ENCODE measurements at regions of chr12 and their contacts with region 1.

Region 1: DNA sequence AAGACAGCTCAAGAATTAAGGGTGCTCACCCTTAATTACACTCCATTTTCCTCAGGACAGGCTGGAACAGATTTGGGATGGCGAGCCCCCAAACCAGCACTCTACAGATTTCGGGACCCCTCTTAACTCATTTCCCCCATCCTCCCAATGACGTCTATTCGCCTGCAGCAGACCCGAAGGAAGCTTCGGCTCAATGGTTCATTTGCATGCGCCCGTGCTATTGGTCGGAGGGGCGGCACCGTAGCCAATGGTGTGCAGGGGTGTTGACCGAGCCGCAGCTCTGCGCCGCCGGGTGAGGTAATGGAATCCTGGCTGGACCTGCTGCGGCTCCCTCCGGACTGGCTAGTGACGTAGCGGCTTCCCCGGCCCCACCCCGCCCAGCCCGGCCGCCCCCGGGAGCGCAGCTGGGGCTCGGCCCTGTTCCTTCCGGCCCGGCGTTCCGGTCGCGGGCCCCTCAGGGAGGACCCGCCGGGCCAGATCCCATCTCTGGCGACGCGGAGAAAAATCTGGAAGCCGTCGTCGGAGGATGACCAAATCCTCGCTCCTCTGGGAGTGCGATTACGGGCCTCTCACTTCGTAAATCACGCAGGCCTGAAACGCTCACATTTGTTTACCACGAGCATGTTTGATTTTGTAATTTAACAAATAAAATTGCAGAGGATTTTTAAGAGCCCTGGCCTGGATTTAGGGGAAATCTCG is 18.3 kb upstream of the NR4A1 start:
- DNase-seq: peak; percentile 95
- ATAC-seq: peak; percentile 79
- H3K4me3 ChIP-seq: peak overlapping the region; percentile 34 to 62 (median 57)
- H3K4me3 Mint-ChIP-seq: peak overlapping the region; percentile 88
- H3K27ac ChIP-seq: peak overlapping the region; percentile 93 to 96
- H3K27ac Mint-ChIP-seq: peak overlapping the region; percentile 94
- H3K4me1 ChIP-seq: peaks cover 35 to 49% of the 10 kb centered on the region in 2 donors
- H3K4me1 Mint-ChIP-seq: peaks cover 48% of the 10 kb centered on the region
- H3K27me3 ChIP-seq: peaks cover 0 to 2% (median 0%) of the 10 kb centered on the region in 4 experiments
- H3K27me3 Mint-ChIP-seq: no peaks in the 10 kb centered on the region
- CTCF ChIP-seq: no peak

Region 2: GRCh38 chr12:51951199-51951842 is 81.6 kb before region 1 on chr12 and contains the start of gene ACVR1B:
- CTCF ChIA-PET with region 1: no interaction called
- POLR2A ChIA-PET with region 1: no interaction called
- intact Hi-C with region 1: loop called (anchors 5 kb)
- DNase-seq: peak; percentile 90
- ATAC-seq: peak; percentile 93
- H3K4me3 ChIP-seq: peak within 1 kb of the TSS; percentile 48 to 80 (median 75)
- H3K4me3 Mint-ChIP-seq: peak within 1 kb of the TSS; percentile 97
- H3K27ac ChIP-seq: peak within 1 kb of the TSS; percentile 6 to 60
- H3K27ac Mint-ChIP-seq: peak within 1 kb of the TSS; percentile 80
- H3K4me1 ChIP-seq: peaks cover 9 to 18% of the 10 kb centered on the region in 2 donors
- H3K4me1 Mint-ChIP-seq: peaks cover 26% of the 10 kb centered on the region
- H3K27me3 ChIP-seq: peaks cover 0 to 28% (median 6%) of the 10 kb centered on the region in 4 experiments
- H3K27me3 Mint-ChIP-seq: peaks cover 27% of the 10 kb centered on the region
- CTCF ChIP-seq: no peak
- total RNA-seq, gene ACVR1B: 8.7 and 10.6 TPM in 2 replicates

Region 3: DNA sequence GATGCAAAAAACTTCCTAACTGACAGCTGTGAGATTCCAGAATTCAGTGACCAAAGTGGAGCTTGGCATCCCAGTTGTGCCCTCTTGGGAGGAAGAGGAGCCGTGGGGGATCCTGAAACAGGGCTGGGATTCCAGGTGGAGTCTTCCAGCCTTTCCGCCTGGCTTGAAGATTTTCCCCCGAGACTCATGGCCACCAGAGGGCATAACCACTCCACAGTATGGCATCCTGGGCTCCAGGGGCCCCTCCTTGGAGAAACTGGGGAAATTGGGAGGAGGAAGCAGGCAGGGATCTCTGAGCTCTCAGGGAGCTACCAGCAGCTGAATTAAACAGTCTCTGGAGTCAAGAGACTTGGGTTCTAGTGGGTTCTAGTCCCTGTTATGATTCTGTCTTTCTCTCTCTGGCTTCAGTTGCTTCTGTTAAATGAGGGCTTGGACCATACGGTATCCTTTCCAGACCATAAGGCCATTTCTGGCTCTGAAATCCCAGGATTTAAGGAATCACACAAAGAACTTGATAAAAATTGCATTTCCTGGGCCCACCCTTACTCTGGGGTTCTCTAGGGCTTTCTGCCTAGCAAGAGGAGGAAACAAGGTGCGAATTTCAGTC is 28.8 kb before region 1 on chr12:
- CTCF ChIA-PET with region 1: interaction called, 707 read pairs
- POLR2A ChIA-PET with region 1: interaction called, 6 read pairs
- intact Hi-C with region 1: no loop called
- DNase-seq: peak; percentile 51
- ATAC-seq: no peak
- H3K4me3 ChIP-seq: no peak overlapping the region
- H3K4me3 Mint-ChIP-seq: no peak overlapping the region
- H3K27ac ChIP-seq: no peak overlapping the region
- H3K27ac Mint-ChIP-seq: no peak overlapping the region
- H3K4me1 ChIP-seq: peaks cover 26 to 32% of the 10 kb centered on the region in 2 donors
- H3K4me1 Mint-ChIP-seq: peaks cover 37% of the 10 kb centered on the region
- H3K27me3 ChIP-seq: no peaks in the 10 kb centered on the region
- H3K27me3 Mint-ChIP-seq: no peaks in the 10 kb centered on the region
- CTCF ChIP-seq: peak; percentile 3

Region 4: GRCh38 chr12:52069327-52070184 is 36.6 kb after region 1 on chr12 and contains the start of gene ATG101:
- CTCF ChIA-PET with region 1: interaction called, 1,315 read pairs
- POLR2A ChIA-PET with region 1: interaction called, 11 read pairs
- intact Hi-C with region 1: loop called (anchors 1 kb)
- DNase-seq: peak; percentile 98
- ATAC-seq: peak; percentile 94
- H3K4me3 ChIP-seq: peak within 1 kb of the TSS; percentile 65 to 98 (median 93)
- H3K4me3 Mint-ChIP-seq: peak within 1 kb of the TSS; percentile 90
- H3K27ac ChIP-seq: peak within 1 kb of the TSS; percentile 90 to 93
- H3K27ac Mint-ChIP-seq: peak within 1 kb of the TSS; percentile 96
- H3K4me1 ChIP-seq: peaks cover 29 to 48% of the 10 kb centered on the region in 2 donors
- H3K4me1 Mint-ChIP-seq: peaks cover 46% of the 10 kb centered on the region
- H3K27me3 ChIP-seq: peaks cover 0 to 5% (median 0%) of the 10 kb centered on the region in 4 experiments
- H3K27me3 Mint-ChIP-seq: peaks cover 3% of the 10 kb centered on the region
- CTCF ChIP-seq: peak; percentile 79
- total RNA-seq, gene ATG101: 19.4 and 20.0 TPM in 2 replicates

Region 5: DNA sequence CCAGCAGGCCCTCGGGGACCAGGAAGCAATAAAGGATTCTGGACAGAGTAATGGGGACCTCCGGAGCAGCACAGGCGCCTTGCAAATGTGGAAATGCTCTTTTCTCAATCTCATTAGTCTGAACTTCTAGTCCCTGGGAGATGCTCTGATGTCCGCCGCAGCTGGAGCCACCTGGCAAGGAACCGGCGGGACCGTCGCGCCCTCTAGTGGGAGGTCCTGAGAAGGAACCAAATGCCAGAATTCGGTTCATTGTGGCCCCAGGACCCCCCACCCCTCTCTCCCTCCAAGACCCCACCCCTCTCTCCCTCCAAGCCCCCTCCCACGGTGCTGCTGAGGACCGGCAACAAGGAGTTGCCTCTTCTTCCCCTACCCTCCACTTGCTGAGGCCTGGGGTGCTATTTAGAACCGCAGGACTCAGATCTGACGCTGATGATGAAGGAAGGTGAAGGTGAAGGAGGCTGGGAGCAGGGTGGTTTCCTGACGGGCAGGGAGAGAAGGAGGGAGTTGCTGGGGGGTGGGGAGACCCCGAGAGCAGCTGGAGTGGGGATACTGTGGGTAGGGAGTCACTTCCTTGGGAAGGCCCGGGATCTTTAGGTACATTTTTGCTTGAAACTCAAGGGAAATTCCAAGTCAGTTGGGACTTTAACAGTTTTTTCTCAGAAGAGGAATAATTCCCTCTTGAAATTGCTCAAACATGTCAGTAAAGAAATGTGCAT is 89.0 kb after region 1 on chr12:
- CTCF ChIA-PET with region 1: interaction called, 407 read pairs
- POLR2A ChIA-PET with region 1: interaction called, 4 read pairs
- intact Hi-C with region 1: loop called (anchors 2 kb)
- DNase-seq: peak; percentile 73
- ATAC-seq: no peak
- H3K4me3 ChIP-seq: no peak overlapping the region
- H3K4me3 Mint-ChIP-seq: no peak overlapping the region
- H3K27ac ChIP-seq: no peak overlapping the region
- H3K27ac Mint-ChIP-seq: peak overlapping the region; percentile 74
- H3K4me1 ChIP-seq: peaks cover 25 to 36% of the 10 kb centered on the region in 2 donors
- H3K4me1 Mint-ChIP-seq: peaks cover 38% of the 10 kb centered on the region
- H3K27me3 ChIP-seq: peaks cover 0 to 28% (median 8%) of the 10 kb centered on the region in 4 experiments
- H3K27me3 Mint-ChIP-seq: peaks cover 10% of the 10 kb centered on the region
- CTCF ChIP-seq: peak; percentile 87